ENCODE measurements at regions of chr19 and their contacts with region 1.

Region 1: GRCh38 chr19:55289117-55289796 is 5.5 kb downstream of the BRSK1 start:
- H3K4me3 Mint-ChIP-seq: no peak overlapping the region
- H3K27ac Mint-ChIP-seq: no peak overlapping the region
- H3K4me1 Mint-ChIP-seq: no peaks in the 10 kb centered on the region
- H3K27me3 Mint-ChIP-seq: peaks cover 36% of the 10 kb centered on the region

Region 2: DNA sequence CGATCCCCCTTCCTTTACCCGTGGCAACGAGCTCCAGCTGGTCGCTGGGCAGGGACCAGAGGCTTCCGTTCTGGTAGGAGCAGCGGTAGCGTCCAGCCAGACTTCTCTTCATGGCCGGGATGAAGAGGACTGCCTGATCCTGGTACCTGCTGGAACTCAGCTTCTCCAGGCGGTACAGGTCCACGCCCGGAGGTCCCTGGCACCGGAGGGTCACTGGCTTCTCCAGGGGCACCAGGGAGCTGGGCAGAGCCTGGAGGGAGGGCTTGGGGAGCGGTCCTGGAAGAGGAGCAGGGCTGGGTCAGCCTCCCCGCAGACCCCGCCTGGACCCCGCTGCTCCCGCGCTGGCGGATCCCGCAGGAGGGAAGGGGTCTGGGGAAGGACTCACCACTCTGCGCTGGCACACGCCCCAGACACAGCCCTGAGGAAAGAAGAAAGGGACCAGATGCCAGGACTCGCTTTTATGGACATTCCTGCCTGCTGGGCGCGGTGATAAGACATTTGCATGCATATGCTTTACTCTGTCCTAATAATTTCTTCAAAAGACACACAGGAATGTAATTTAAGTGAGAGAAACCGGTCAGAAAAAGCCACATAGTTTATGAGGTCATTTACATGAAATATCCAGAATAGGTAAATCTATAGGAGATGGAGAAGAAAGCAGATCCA is 257.0 kb before region 1 on chr19:
- intact Hi-C with region 1: no loop called
- H3K4me3 Mint-ChIP-seq: no peak overlapping the region
- H3K27ac Mint-ChIP-seq: no peak overlapping the region
- H3K4me1 Mint-ChIP-seq: peaks cover 12% of the 10 kb centered on the region
- H3K27me3 Mint-ChIP-seq: peaks cover 2% of the 10 kb centered on the region

Region 3: DNA sequence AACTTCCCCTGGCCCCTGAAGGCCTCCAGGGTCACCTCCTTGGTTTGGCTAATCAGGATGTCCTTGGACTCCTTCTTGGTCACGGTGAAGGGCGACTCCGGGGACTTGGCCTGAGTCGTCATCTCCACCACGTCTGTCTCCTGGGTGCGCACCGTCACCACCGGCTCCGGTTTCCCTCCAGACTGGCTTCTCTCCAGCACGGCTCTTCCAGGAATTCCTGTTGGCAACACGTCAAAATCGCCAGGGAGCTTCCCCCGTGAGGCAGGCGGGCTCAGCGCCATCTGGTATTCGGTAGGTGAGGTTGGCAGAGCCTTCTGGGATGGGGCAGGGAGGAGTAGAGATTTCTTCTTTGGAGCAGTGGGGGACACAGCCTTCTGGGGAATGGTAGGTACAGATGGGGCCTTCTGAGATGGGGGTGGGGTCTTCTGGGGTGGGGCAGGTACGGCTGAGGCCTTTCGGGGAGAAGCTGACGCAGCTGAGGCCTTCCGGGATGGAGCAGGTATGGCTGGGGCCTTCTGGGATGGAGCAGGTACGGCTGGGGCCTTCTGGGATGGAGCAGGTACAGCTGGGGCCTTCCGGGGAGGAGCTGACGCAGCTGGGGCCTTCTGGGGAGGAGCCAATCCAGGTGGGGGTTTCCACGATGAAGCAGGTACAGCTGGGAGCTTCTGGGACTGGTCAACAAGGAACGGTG is 69.8 kb after region 1 on chr19:
- intact Hi-C with region 1: no loop called
- H3K4me3 Mint-ChIP-seq: no peak overlapping the region
- H3K27ac Mint-ChIP-seq: no peak overlapping the region
- H3K4me1 Mint-ChIP-seq: no peaks in the 10 kb centered on the region
- H3K27me3 Mint-ChIP-seq: peaks cover 45% of the 10 kb centered on the region

Region 4: GRCh38 chr19:55385740-55386529 is 96.7 kb after region 1 on chr19 and contains the start of gene RPL28:
- intact Hi-C with region 1: loop called (anchors 5 kb)
- H3K4me3 Mint-ChIP-seq: peak within 1 kb of the TSS; percentile 91
- H3K27ac Mint-ChIP-seq: peak within 1 kb of the TSS; percentile 95
- H3K4me1 Mint-ChIP-seq: peaks cover 72% of the 10 kb centered on the region
- H3K27me3 Mint-ChIP-seq: peaks cover 12% of the 10 kb centered on the region

Region 5: GRCh38 chr19:55418185-55418584 is 128.9 kb after region 1 on chr19:
- intact Hi-C with region 1: loop called (anchors 2 kb)
- H3K4me3 Mint-ChIP-seq: peak overlapping the region; percentile 23
- H3K27ac Mint-ChIP-seq: peak overlapping the region; percentile 75
- H3K4me1 Mint-ChIP-seq: peaks cover 14% of the 10 kb centered on the region
- H3K27me3 Mint-ChIP-seq: peaks cover 17% of the 10 kb centered on the region

Measured in dendritic cell treated with granulocyte-macrophage colony-stimulating factor and Interleukin-4, amounts not matched to agents 40 ng/mL and 50 ng/mL, for 4 days (primary cell).